ENCODE measurements at regions of chr18 and their contacts with region 1.

Region 1: GRCh38 chr18:9066817-9067306 is 35.6 kb upstream of the NDUFV2 start:
- DNase-seq: no peak
- H3K4me3 ChIP-seq: no peak overlapping the region
- H3K27me3 ChIP-seq: no peaks in the 10 kb centered on the region
- CTCF ChIP-seq: no peak

Region 2: GRCh38 chr18:8980903-8981302 is 86.0 kb before region 1 on chr18:
- CTCF ChIA-PET with region 1: no interaction called
- POLR2A ChIA-PET with region 1: no interaction called
- DNase-seq: no peak
- H3K4me3 ChIP-seq: no peak overlapping the region
- H3K27me3 ChIP-seq: no peaks in the 10 kb centered on the region
- CTCF ChIP-seq: no peak

Region 3: DNA sequence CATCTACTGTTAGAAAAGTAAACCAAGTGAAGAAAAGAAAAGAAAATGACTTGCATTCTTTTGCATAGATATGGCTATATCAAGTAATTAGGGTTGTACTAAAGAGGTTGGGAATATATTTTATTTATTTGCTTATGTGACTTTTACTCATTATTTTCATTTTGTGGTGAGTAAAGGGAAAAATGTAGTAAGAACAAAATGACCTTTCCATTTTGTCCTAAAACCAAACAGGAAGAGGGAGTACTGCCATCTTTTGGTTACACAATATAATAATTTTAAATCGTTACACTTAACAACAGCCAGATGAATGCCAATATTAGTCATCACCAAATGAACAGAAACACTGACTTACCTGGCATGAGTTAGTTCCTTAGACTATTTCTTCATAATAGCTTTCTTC is 11.7 kb before region 1 on chr18:
- CTCF ChIA-PET with region 1: interaction called, 12 read pairs
- POLR2A ChIA-PET with region 1: no interaction called
- DNase-seq: peak; percentile 74
- H3K4me3 ChIP-seq: no peak overlapping the region
- H3K27me3 ChIP-seq: no peaks in the 10 kb centered on the region
- CTCF ChIP-seq: peak; percentile 27; the same call in 1 of the 2 replicates

Measured in BJ (cell line).